ENCODE measurements at regions of chr10 and their contacts with region 1.

Region 1: GRCh38 chr10:66586073-66586472 is 339.8 kb upstream of the LRRTM3 start:
- DNase-seq: no peak
- H3K4me3 ChIP-seq: no peak overlapping the region
- H3K27ac ChIP-seq: no peak overlapping the region
- H3K27me3 ChIP-seq: no peaks in the 10 kb centered on the region
- CTCF ChIP-seq: peak; percentile 50

Region 2: DNA sequence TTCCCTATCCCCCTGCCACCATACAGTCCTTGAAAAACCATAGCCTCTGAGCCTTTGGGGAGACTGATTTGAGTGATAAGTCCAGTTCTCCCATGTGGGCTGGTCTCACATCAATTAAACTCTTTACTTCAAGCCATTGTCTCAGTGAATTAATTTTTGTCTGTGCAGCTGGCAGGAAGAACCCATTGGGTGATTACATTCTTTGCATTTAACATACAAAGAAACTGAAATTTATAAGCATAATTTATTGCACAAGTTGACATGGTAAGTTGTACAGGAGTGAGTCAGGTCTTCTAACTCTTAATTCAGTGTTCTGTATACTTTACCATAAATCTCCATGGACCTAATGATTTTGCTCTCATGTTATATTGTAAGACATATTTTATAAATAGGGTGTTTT is 1273.2 kb before region 1 on chr10:
- CTCF ChIA-PET with region 1: interaction called, 12 read pairs
- POLR2A ChIA-PET with region 1: no interaction called
- DNase-seq: no peak
- H3K4me3 ChIP-seq: no peak overlapping the region
- H3K27ac ChIP-seq: no peak overlapping the region
- H3K27me3 ChIP-seq: no peaks in the 10 kb centered on the region
- CTCF ChIP-seq: no peak

Region 3: GRCh38 chr10:66931340-66931948 is 345.4 kb after region 1 on chr10:
- CTCF ChIA-PET with region 1: interaction called, 11 read pairs
- POLR2A ChIA-PET with region 1: no interaction called
- DNase-seq: peak; percentile 41
- H3K4me3 ChIP-seq: no peak overlapping the region
- H3K27ac ChIP-seq: no peak overlapping the region
- H3K27me3 ChIP-seq: peaks cover 18% of the 10 kb centered on the region
- CTCF ChIP-seq: peak; percentile 85